ENCODE measurements at regions of chr14 and their contacts with region 1.

Region 1: DNA sequence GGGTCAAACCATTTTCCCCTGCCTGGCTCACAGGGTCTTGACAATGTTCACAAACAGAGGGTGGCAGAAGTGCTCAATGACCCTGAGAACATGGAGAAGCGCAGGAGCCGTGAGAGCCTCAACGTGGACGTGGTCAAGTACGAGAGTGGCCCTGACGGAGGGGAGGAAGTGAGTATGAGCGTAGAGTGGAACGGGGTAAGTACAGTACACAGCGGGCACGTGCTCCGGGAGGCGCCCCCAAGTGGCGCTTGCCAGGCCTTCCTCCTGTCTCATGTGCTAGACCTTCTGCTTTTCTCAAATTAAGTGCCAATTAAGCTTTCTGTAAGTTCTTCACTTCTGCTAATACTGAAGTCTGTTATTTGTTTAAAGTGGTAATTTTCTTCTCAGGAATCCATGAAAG is 35.9 kb downstream of the XRCC3 start:
- DNase-seq: peak in 1 of 2 experiments; percentile 61
- H3K4me3 ChIP-seq: no peak overlapping the region
- H3K27ac ChIP-seq: no peak overlapping the region
- H3K4me1 ChIP-seq: no peaks in the 10 kb centered on the region
- H3K27me3 ChIP-seq: no peaks in the 10 kb centered on the region
- CTCF ChIP-seq: peak; percentile 55 to 81 (median 74); a peak in 3 of 4 replicates
- EP300 ChIP-seq: no peak
- POLR2A ChIP-seq: no peak
- RAD21 ChIP-seq: peak; percentile 42 to 44

Region 2: DNA sequence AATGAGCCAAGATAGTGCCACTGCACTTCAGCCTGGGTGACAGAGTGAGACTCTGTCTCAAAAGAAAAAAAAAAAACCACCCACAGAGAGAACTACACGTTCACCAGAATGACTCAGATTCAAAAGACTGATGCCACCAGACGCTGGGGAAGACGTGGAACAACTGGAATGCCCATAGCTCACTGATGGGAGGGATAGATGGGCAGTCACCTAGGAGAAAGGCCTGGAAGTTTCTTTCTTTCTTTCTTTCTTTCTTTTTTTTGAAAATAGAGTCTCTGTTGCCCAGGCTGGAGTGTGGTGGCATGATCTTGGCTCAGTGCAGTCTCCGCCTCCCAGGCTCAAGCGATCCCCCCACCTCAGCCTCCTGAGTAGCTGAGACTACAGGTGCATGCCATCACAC is 60.3 kb before region 1 on chr14:
- CTCF ChIA-PET with region 1: no interaction called
- POLR2A ChIA-PET with region 1: no interaction called
- DNase-seq: no peak
- H3K4me3 ChIP-seq: no peak overlapping the region
- H3K27ac ChIP-seq: no peak overlapping the region
- H3K4me1 ChIP-seq: no peaks in the 10 kb centered on the region
- H3K27me3 ChIP-seq: no peaks in the 10 kb centered on the region
- CTCF ChIP-seq: no peak
- EP300 ChIP-seq: no peak
- POLR2A ChIP-seq: no peak
- RAD21 ChIP-seq: no peak

Region 3: DNA sequence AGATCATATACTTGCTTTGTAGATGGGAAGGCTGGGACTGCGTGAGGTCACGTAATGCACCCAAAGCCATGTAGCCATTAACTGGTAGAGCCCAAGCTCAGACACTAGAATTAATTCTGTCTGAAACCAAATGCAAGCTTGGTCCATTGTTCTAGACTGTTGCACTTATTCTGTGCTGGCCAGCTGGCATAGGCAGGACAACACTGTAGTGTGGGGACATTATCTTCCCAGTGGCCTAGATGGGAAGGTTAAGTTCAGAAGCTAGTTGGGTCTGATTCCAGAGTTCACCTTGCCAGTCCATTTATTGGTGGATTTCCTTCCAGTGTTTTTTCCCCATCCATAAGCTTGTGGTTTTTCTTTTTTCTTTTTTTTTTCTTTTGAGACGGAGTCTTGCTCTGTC is 11.2 kb before region 1 on chr14:
- CTCF ChIA-PET with region 1: interaction called, 13 read pairs
- POLR2A ChIA-PET with region 1: interaction called, 4 read pairs
- DNase-seq: no peak
- H3K4me3 ChIP-seq: no peak overlapping the region
- H3K27ac ChIP-seq: no peak overlapping the region
- H3K4me1 ChIP-seq: no peaks in the 10 kb centered on the region
- H3K27me3 ChIP-seq: no peaks in the 10 kb centered on the region
- CTCF ChIP-seq: no peak
- EP300 ChIP-seq: no peak
- POLR2A ChIP-seq: no peak
- RAD21 ChIP-seq: no peak

Region 4: DNA sequence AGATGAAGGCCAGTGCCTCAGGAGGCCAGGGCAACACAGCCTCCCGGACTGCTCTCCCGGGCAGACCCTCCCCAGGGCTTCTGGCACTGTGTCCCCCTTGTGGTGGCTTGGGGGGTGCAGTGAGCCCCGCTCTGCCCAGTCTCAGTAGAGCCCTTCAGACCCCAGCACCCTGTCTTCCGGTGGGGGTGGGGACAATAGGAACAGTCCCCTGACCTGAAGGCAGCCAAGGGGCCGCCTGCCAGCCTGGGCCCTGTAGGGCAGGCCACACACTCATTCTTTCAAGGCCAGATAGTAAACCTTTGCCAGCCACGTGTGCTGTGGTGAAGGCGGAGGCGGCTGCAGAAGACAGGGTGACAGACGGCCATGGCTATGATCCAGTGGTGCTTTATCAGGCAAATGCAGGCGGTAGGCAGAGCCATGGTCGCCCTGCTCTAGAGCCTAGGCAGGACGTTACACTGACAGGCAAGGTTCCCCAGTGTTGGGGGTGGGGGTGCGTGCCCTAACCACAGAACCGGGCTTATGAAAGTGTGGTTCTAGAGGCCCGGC is 51.2 kb after region 1 on chr14:
- CTCF ChIA-PET with region 1: no interaction called
- POLR2A ChIA-PET with region 1: no interaction called
- DNase-seq: no peak
- H3K4me3 ChIP-seq: no peak overlapping the region
- H3K27ac ChIP-seq: no peak overlapping the region; the same call in 1 of the 2 replicates
- H3K4me1 ChIP-seq: no peaks in the 10 kb centered on the region; a peak in 1 of 7 replicates
- H3K27me3 ChIP-seq: no peaks in the 10 kb centered on the region
- CTCF ChIP-seq: peak in 1 of 3 experiments; percentile 12; a peak in 1 of 4 replicates
- EP300 ChIP-seq: no peak
- POLR2A ChIP-seq: no peak
- RAD21 ChIP-seq: no peak